HEK293 (cell line): ENCODE measurements at regions of chr1 and their contacts with region 1.

Region 1: DNA sequence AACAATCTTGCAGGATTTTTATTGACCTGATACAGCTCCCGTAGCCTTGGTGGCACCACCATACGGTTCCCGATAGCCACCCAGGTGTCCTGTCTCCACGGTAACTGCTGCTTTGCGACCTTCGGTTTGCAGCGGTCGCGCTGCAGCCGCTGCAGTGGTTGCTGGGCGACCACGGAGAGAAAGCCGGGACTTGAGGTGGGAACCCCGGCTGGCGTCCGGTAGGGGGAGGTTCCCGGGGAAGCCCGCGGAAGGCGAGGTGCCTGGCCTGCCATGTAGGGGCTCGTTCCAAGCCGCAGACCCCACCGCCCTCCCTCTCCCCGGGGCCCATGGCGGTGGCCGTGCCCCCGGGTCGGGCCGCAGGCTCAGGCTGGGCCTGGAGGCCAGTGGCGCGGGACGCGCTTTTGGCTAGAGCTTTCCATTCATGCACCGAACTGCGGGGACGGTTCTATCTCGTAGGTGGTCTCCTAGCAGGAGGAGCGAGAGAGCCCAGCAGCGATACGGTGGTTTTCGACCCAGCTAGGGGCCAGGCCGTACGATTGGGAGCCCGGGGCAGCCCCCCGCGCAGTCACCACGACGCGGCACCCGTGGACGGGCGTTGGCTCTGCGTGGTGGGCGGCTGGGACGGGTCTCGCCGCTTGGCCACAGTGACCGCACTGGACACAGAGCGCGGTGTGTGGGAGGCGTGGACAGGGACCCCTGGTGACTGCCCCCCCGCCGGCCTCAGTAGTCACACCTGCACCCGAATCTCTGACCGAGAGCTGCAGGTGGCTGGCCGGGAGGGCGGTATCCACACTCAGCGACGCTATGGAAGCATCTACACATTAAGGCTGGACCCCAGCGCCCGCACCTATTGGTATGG is at the start of gene KLHDC9:
- H3K4me3 ChIP-seq: peak within 1 kb of the TSS; percentile 74
- H3K27ac ChIP-seq: peak within 1 kb of the TSS; percentile 12; the same call in 1 of the 2 replicates
- H3K4me1 ChIP-seq: no peaks in the 10 kb centered on the region; the same call in 1 of the 2 replicates
- CTCF ChIP-seq: peak; percentile 87

Region 2: DNA sequence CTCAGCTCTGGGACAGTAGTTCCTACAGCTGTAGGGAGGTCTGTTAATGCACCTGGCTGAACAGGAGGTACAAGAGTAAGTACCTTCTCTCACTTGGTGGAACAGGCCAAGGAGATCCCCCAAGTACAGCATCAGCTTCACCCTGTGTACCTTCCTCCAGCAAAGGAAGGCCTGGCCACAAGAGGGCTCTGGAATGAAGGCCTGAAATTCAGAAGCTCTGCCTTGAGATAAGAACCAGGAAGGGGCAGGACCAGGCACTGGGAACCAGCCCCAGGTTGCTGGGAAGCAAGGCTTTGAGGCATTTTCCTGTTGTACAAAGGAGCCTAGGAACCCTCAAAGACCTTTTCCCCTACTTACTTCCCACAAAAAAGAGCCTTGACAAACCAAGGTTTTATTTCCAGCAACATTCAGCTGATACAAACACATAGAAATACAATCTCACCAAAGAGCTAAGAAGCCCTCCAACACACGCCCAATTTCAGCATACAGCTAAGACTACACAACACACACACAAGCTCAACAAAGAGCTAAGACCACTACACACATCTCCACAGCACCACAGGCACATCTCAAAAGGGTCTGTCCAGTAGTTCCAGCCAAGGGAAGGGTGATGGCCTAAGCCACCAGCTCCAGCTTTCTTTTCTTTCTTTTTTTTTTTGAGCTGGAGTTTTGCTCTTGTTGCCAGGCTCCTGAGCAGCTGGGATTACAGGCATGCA is 101.0 kb before region 1 on chr1:
- CTCF ChIA-PET with region 1: interaction called, 60 read pairs
- POLR2A ChIA-PET with region 1: interaction called, 5 read pairs
- H3K4me3 ChIP-seq: no peak overlapping the region
- H3K27ac ChIP-seq: no peak overlapping the region
- H3K4me1 ChIP-seq: peaks cover 5% of the 10 kb centered on the region
- CTCF ChIP-seq: peak; percentile 54; the same call in 1 of the 2 replicates

Region 3: GRCh38 chr1:161045750-161046571 is 52.5 kb before region 1 on chr1 and contains the start of gene USF1:
- CTCF ChIA-PET with region 1: interaction called, 27 read pairs
- POLR2A ChIA-PET with region 1: interaction called, 10 read pairs
- H3K4me3 ChIP-seq: peak within 1 kb of the TSS; percentile 64
- H3K27ac ChIP-seq: peak within 1 kb of the TSS; percentile 65
- H3K4me1 ChIP-seq: 0 out of 2 replicates have a peak, but pooled peaks cover 4% of the 10 kb centered on the region
- CTCF ChIP-seq: no peak

Region 4: GRCh38 chr1:161079445-161080110 is 18.9 kb before region 1 on chr1:
- CTCF ChIA-PET with region 1: interaction called, 56 read pairs
- POLR2A ChIA-PET with region 1: interaction called, 8 read pairs
- H3K4me3 ChIP-seq: no peak overlapping the region
- H3K27ac ChIP-seq: no peak overlapping the region
- H3K4me1 ChIP-seq: no peaks in the 10 kb centered on the region; the same call in 1 of the 2 replicates
- CTCF ChIP-seq: no peak

Region 5: DNA sequence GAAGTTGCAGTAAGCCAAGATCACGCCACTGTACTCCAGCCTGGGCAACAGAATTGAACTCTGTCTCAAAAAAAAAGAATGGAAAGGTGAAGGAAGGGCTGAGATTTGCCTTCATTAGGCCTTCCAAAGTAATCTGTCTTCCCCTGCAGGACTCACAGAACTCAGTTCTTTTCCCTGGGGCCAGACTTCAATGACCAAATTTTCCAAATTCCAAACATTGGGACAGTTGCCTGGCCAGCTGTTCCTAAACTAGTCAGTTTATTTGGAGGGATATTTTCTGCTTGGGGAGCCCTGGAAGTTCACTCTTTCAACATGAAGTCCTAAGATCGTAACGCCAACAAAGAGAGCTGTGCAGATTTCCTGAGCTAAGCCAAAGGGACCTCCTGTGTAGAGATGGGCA is 39.4 kb after region 1 on chr1:
- CTCF ChIA-PET with region 1: interaction called, 21 read pairs
- POLR2A ChIA-PET with region 1: interaction called, 3 read pairs
- H3K4me3 ChIP-seq: no peak overlapping the region
- H3K27ac ChIP-seq: no peak overlapping the region
- H3K4me1 ChIP-seq: no peaks in the 10 kb centered on the region
- CTCF ChIP-seq: no peak